HepG2 (cell line): ENCODE measurements at regions of chr10 and their contacts with region 1.

Region 1: DNA sequence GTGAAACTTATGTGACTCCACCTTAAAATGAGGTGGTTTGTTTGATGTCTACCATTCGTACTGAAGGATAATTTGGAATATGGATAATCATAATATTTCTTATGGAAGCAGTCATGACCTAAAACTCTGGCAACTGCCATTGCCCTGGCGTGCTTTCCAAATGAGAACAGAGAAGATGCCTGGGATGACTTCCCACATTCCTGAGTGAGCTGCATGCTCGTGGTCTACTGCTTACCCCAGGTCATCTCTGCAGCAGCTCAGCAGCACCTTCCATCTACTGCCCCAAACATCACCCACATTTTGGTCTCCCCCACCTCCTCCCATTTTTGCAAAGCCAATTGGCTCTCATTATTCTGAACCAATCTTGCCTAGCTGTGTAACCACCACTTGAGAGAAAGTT is 40.1 kb downstream of the LYZL1 start:
- DNase-seq: no peak
- ATAC-seq: no peak
- H3K4me3 ChIP-seq: no peak overlapping the region
- H3K27ac ChIP-seq: peak overlapping the region; percentile 97
- H3K4me1 ChIP-seq: peaks cover 99% of the 10 kb centered on the region
- H3K27me3 ChIP-seq: no peaks in the 10 kb centered on the region
- CTCF ChIP-seq: no peak
- EP300 ChIP-seq: no peak
- POLR2A ChIP-seq: no peak
- RAD21 ChIP-seq: no peak

Region 2: DNA sequence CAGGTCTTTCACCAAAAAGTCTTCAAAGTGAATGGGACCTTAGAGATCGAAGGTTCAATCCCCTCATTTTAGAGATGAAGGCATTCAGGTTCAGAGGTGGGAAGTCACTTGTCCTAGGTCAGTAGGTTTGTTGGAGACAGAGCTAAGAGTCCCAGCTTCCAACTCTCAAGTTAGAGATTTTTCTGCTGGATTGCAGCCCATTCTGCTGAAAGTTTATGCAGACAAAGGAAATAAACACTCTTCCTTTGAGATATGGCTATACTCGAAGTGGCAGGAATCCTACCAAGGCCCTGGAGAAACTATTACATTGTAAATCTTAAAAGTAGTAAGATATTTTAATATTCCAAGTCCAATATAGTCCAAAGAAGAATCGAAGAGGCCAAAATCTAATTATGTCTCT is 24.3 kb after region 1 on chr10:
- CTCF ChIA-PET with region 1: no interaction called
- POLR2A ChIA-PET with region 1: interaction called, 15 read pairs
- in situ Hi-C with region 1: no loop called
- intact Hi-C with region 1: loop called (anchors 2 kb)
- DNase-seq: no peak
- ATAC-seq: no peak
- H3K4me3 ChIP-seq: no peak overlapping the region
- H3K27ac ChIP-seq: peak overlapping the region; percentile 52
- H3K4me1 ChIP-seq: peaks cover 86% of the 10 kb centered on the region
- H3K27me3 ChIP-seq: no peaks in the 10 kb centered on the region
- CTCF ChIP-seq: no peak
- EP300 ChIP-seq: no peak
- POLR2A ChIP-seq: no peak
- RAD21 ChIP-seq: no peak

Region 3: DNA sequence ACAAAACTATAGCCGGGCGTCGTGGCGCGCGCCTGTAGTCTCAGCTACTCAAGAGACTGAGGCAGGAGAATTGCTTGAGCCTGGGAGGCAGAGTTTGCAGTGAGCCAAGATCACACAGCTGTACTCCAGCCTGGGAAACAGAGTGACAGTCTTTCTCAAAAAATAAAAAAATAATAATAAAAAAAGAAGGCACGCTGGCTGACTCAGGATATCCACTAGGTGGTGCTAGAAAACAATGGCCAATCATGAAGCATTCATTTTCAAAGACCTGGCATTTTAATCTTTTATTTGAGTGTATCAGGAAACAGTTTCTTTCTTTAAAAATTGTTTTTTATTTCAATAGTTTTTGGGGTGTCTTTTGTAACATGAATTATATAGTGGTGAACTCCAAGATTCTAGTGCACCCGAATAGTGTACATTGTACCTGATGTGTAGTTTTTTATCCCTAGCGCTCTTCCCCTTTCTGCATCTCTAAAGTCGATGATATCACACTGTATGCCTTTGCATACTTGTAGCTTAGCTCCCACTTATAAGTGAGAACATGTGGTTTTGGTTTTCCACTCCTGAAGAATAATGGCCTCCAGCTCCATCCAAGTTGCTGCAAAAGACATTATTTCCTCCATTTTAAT is 48.5 kb after region 1 on chr10:
- CTCF ChIA-PET with region 1: no interaction called
- POLR2A ChIA-PET with region 1: interaction called, 3 read pairs
- in situ Hi-C with region 1: no loop called
- intact Hi-C with region 1: loop called (anchors 5 kb)
- DNase-seq: no peak
- ATAC-seq: no peak
- H3K4me3 ChIP-seq: no peak overlapping the region
- H3K27ac ChIP-seq: no peak overlapping the region
- H3K4me1 ChIP-seq: peaks cover 36% of the 10 kb centered on the region
- H3K27me3 ChIP-seq: peaks cover 0 to 6% of the 10 kb centered on the region in 2 experiments; a peak in 2 of 5 replicates
- CTCF ChIP-seq: peak; percentile 40; the same call in 1 of the 2 replicates
- EP300 ChIP-seq: no peak
- POLR2A ChIP-seq: no peak
- RAD21 ChIP-seq: no peak